ENCODE measurements at regions of chr11 and their contacts with region 1.

Region 1: DNA sequence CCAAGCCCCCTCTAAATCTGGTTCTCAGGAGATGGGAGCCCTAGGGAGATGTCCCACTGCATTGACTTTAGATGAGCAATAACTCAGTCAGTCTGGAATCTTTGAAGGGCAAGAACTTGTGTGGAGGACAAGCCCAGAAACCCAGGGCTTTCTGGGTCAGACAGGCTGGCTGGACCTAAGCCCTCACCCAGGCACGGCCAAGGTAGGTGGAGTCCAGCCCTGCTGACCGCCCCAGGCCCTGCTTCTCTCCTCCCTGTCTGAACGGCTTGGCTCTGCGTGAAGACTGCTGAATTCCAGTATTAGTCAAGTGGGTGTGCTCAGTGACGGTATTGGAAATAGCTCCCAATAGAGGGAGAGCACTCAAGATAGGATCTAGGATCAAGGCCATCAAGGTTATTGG is 6.1 kb downstream of the CXCR5 start:
- DNase-seq: peak; percentile 25
- ATAC-seq: no peak
- H3K4me3 ChIP-seq: peak overlapping the region in 2 of 5 experiments; percentile 97 to 99
- H3K4me3 Mint-ChIP-seq: peak overlapping the region; percentile 97
- H3K27ac ChIP-seq: peak overlapping the region; percentile 91 to 99
- H3K27ac Mint-ChIP-seq: peak overlapping the region; percentile 90
- H3K4me1 ChIP-seq: peaks cover 84 to 100% of the 10 kb centered on the region in 2 donors
- H3K4me1 Mint-ChIP-seq: peaks cover 93% of the 10 kb centered on the region
- H3K27me3 ChIP-seq: no peaks in the 10 kb centered on the region
- H3K27me3 Mint-ChIP-seq: no peaks in the 10 kb centered on the region
- CTCF ChIP-seq: no peak

Region 2: GRCh38 chr11:118514103-118514502 is 375.7 kb before region 1 on chr11:
- CTCF ChIA-PET with region 1: no interaction called
- POLR2A ChIA-PET with region 1: interaction called, 15 read pairs
- intact Hi-C with region 1: no loop called
- DNase-seq: no peak
- ATAC-seq: no peak
- H3K4me3 ChIP-seq: no peak overlapping the region
- H3K4me3 Mint-ChIP-seq: no peak overlapping the region
- H3K27ac ChIP-seq: peak overlapping the region in 1 of 2 donors; percentile 42
- H3K27ac Mint-ChIP-seq: peak overlapping the region; percentile 3
- H3K4me1 ChIP-seq: no peaks in the 10 kb centered on the region
- H3K4me1 Mint-ChIP-seq: peaks cover 3% of the 10 kb centered on the region
- H3K27me3 ChIP-seq: no peaks in the 10 kb centered on the region
- H3K27me3 Mint-ChIP-seq: no peaks in the 10 kb centered on the region
- CTCF ChIP-seq: no peak

Region 3: GRCh38 chr11:118878163-118878563 is 11.6 kb before region 1 on chr11:
- CTCF ChIA-PET with region 1: interaction called, 9 read pairs
- POLR2A ChIA-PET with region 1: interaction called, 20 read pairs
- intact Hi-C with region 1: loop called (anchors 1 kb)
- DNase-seq: peak; percentile 31
- ATAC-seq: no peak
- H3K4me3 ChIP-seq: no peak overlapping the region
- H3K4me3 Mint-ChIP-seq: no peak overlapping the region
- H3K27ac ChIP-seq: peak overlapping the region; percentile 79 to 93
- H3K27ac Mint-ChIP-seq: peak overlapping the region; percentile 72
- H3K4me1 ChIP-seq: peaks cover 67% of the 10 kb centered on the region in 2 donors
- H3K4me1 Mint-ChIP-seq: peaks cover 75% of the 10 kb centered on the region
- H3K27me3 ChIP-seq: no peaks in the 10 kb centered on the region
- H3K27me3 Mint-ChIP-seq: no peaks in the 10 kb centered on the region
- CTCF ChIP-seq: no peak

Region 4: GRCh38 chr11:120441592-120441991 is 1551.8 kb after region 1 on chr11:
- CTCF ChIA-PET with region 1: no interaction called
- POLR2A ChIA-PET with region 1: no interaction called
- intact Hi-C with region 1: no loop called
- DNase-seq: no peak
- ATAC-seq: no peak
- H3K4me3 ChIP-seq: no peak overlapping the region
- H3K4me3 Mint-ChIP-seq: no peak overlapping the region
- H3K27ac ChIP-seq: no peak overlapping the region
- H3K27ac Mint-ChIP-seq: no peak overlapping the region
- H3K4me1 ChIP-seq: no peaks in the 10 kb centered on the region
- H3K4me1 Mint-ChIP-seq: no peaks in the 10 kb centered on the region
- H3K27me3 ChIP-seq: no peaks in the 10 kb centered on the region
- H3K27me3 Mint-ChIP-seq: no peaks in the 10 kb centered on the region
- CTCF ChIP-seq: no peak

Measured in B cell (primary cell).